ENCODE measurements at regions of chr12 and their contacts with region 1.

Region 1: GRCh38 chr12:120797677-120798642 is 72.3 kb downstream of the ACADS start:
- DNase-seq: no peak
- H3K4me3 ChIP-seq: no peak overlapping the region
- H3K27ac ChIP-seq: no peak overlapping the region
- H3K4me1 ChIP-seq: peaks cover 0 to 7% (median 5%) of the 10 kb centered on the region in 4 donors
- H3K27me3 ChIP-seq: no peaks in the 10 kb centered on the region
- CTCF ChIP-seq: no peak
- EP300 ChIP-seq: no peak
- POLR2A ChIP-seq: no peak

Region 2: DNA sequence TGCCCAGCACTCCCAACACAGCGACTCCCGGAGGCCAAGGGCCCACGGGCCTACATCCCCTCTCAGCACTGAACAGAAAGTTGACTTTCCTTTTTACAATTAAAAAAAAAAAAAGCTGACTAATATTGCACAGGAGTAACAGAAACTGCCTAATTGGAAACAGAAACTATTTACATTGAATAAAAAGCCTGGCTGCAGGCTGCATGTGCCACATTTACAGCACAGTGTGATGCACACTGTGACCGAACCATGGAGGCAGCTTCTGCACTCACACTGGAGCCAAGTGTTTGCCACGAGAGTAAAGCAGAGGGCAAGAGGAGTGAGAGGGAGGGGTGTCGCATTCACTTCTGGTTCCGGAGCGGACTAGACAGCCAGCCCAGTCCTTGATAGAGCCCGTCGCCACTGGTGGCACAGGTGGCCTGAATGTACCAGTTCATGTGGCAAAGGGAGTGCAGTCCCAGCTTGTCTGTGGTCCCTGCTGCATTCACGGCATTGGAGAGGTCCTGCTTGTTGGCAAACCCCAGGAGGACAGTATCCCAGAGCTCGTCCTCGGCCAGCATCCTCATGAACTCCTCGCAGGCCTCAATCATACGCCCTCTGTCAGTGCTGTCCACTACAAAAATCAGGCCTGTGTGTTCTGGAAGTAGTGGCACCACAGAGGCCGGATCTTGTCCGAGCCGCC is 46.9 kb after region 1 on chr12:
- in situ Hi-C with region 1: no loop called
- intact Hi-C with region 1: loop called (anchors 2 kb)
- DNase-seq: no peak
- H3K4me3 ChIP-seq: no peak overlapping the region
- H3K27ac ChIP-seq: no peak overlapping the region
- H3K4me1 ChIP-seq: peaks cover 0 to 49% (median 26%) of the 10 kb centered on the region in 4 donors
- H3K27me3 ChIP-seq: no peaks in the 10 kb centered on the region
- CTCF ChIP-seq: no peak
- EP300 ChIP-seq: no peak
- POLR2A ChIP-seq: no peak